Activated CD4-positive, alpha-beta memory T cell treated with anti-CD3 and anti-CD28 coated beads, Interleukin-2, amount 10 ng/mL, durations not matched to agents 7 days and 5 days (primary cell): ENCODE measurements at regions of chr7 and their contacts with region 1.

Region 1: GRCh38 chr7:24979863-24980533 is at the start of gene OSBPL3:
- DNase-seq: peak; percentile 96
- H3K4me3 Mint-ChIP-seq: peak within 1 kb of the TSS; percentile 90
- H3K27ac Mint-ChIP-seq: peak within 1 kb of the TSS; percentile 88
- H3K4me1 Mint-ChIP-seq: peaks cover 59% of the 10 kb centered on the region
- H3K27me3 Mint-ChIP-seq: no peaks in the 10 kb centered on the region
- total RNA-seq, gene OSBPL3: 90.3 to 99.9 TPM

Region 2: GRCh38 chr7:24819916-24820689 is 159.9 kb before region 1 on chr7:
- CTCF ChIA-PET with region 1: interaction called, 90 read pairs
- POLR2A ChIA-PET with region 1: interaction called, 135 read pairs
- DNase-seq: peak; percentile 80
- H3K4me3 Mint-ChIP-seq: peak overlapping the region; percentile 64
- H3K27ac Mint-ChIP-seq: peak overlapping the region; percentile 100
- H3K4me1 Mint-ChIP-seq: peaks cover 46% of the 10 kb centered on the region
- H3K27me3 Mint-ChIP-seq: no peaks in the 10 kb centered on the region

Region 3: GRCh38 chr7:24877790-24878311 is 102.1 kb before region 1 on chr7:
- CTCF ChIA-PET with region 1: interaction called, 10 read pairs
- POLR2A ChIA-PET with region 1: interaction called, 53 read pairs
- DNase-seq: peak; percentile 50
- H3K4me3 Mint-ChIP-seq: peak overlapping the region; percentile 40
- H3K27ac Mint-ChIP-seq: peak overlapping the region; percentile 78
- H3K4me1 Mint-ChIP-seq: peaks cover 41% of the 10 kb centered on the region
- H3K27me3 Mint-ChIP-seq: no peaks in the 10 kb centered on the region

Region 4: DNA sequence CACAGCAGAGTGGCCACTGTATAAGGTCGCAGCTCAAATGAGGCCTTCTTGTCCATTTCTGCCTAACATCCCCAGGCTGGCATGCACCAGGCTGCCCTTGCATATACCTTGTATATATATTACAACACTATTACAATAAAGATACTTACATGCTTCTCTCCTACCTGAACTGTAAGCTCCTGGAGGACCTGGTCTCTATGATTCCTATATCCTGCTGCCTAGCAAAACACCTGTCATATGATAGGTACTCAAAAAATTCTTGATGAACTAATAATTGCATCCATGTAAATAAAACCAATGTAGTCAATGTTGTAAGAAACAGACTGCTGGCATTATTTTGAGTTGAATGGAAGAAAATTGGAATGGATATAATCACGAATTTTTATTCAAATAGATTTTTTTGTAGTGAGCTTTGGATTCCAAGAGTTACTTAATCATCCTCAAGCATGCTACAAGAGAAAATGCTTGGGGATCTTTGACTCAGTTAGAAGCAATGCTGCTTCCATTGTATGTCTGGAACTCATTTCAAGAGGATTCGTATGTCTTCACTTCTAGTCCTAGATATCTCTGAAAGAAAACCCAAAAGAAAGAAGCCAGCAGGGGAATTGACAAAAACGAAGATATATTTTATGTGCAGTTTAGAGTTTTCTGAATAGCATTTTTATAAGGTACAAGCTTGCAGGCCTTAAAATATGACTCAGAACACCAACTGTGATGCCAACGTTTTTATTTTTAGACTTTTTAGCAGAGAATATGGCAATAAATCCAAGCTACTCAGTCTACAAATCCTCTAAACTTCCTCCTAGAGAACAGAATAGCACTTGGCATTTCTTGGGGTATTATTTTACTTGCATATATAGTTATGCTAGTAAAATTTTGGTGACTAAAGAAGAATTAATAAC is 53.1 kb before region 1 on chr7:
- CTCF ChIA-PET with region 1: interaction called, 25 read pairs
- POLR2A ChIA-PET with region 1: interaction called, 81 read pairs
- DNase-seq: no peak
- H3K4me3 Mint-ChIP-seq: no peak overlapping the region
- H3K27ac Mint-ChIP-seq: peak overlapping the region; percentile 21
- H3K4me1 Mint-ChIP-seq: peaks cover 69% of the 10 kb centered on the region
- H3K27me3 Mint-ChIP-seq: no peaks in the 10 kb centered on the region

Region 5: GRCh38 chr7:25048444-25048834 is 68.4 kb after region 1 on chr7:
- CTCF ChIA-PET with region 1: no interaction called
- POLR2A ChIA-PET with region 1: no interaction called
- DNase-seq: no peak
- H3K4me3 Mint-ChIP-seq: no peak overlapping the region
- H3K27ac Mint-ChIP-seq: no peak overlapping the region
- H3K4me1 Mint-ChIP-seq: no peaks in the 10 kb centered on the region
- H3K27me3 Mint-ChIP-seq: peaks cover 6% of the 10 kb centered on the region

Region 6: DNA sequence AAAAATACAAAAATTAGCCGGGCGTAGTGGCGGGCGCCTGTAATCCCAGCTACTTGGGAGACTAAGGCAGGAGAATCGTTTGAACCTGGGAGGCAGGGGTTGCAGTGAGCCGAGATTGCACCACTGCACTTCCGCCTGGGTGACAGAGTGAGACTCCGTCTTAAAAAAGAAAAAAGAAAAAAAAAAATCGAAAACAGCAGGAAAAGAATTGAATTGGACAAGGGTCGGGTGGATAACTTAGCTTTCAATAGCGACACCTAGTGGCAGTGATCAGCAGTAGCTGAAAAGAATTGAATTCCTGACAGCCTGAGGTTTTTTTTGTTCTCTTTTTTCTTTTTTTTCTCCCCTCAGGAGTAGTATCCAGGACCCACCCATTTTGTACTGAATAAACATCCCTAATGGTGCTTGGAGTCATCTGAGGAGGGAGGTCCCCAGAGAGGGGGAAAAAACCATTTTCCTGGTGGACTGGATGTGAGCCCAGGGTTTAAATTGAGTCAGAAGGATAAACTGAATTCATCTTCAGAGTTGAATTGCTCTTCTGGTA is 90.0 kb after region 1 on chr7:
- CTCF ChIA-PET with region 1: interaction called, 15 read pairs
- POLR2A ChIA-PET with region 1: interaction called, 5 read pairs
- DNase-seq: peak; percentile 47
- H3K4me3 Mint-ChIP-seq: no peak overlapping the region
- H3K27ac Mint-ChIP-seq: no peak overlapping the region
- H3K4me1 Mint-ChIP-seq: peaks cover 16% of the 10 kb centered on the region
- H3K27me3 Mint-ChIP-seq: no peaks in the 10 kb centered on the region